Mammary epithelial cell (primary cell): ENCODE measurements at regions of chr10 and their contacts with region 1.

Region 1: GRCh38 chr10:11782793-11783557 is 40.2 kb upstream of the PROSER2 start:
- DNase-seq: peak; percentile 52
- H3K4me3 ChIP-seq: no peak overlapping the region
- H3K27ac ChIP-seq: no peak overlapping the region
- H3K4me1 ChIP-seq: no peaks in the 10 kb centered on the region
- H3K27me3 ChIP-seq: no peaks in the 10 kb centered on the region
- CTCF ChIP-seq: peak; percentile 64 to 73

Region 2: DNA sequence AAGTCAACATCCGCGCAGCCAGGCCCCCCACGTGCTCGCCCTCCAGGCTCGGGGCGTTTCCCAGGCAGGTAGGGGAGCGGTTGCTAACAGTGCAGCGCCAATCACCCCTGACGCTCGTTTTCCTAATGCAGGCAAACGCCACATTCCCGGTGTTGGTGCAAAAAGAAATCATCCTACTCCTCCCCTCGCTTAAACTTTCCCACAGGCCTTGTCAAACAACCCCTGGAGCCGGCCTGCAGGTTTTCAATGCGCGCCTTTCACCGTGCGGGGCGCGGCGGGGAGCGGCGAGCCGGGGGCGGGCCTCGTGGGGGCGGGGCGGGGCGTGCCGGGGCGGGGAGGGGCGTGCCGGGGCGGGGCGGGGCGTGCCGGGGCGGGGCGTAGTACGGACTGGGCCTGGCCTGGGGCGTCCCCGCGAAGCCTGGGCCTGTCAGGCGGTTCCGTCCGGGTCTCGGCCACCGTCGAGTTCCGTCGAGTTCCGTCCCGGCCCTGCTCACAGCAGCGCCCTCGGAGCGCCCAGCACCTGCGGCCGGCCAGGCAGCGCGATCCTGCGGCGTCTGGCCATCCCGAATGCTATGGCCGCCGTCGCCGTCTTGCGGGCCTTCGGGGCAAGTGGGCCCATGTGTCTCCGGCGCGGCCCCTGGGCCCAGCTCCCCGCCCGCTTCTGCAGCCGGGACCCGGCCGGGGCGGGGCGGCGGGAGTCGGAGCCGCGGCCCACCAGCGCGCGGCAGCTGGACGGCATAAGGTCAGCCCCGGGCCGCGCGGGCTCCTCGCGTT is 40.8 kb before region 1 on chr10 and contains the start of gene ECHDC3:
- CTCF ChIA-PET with region 1: interaction called, 12 read pairs
- dilution Hi-C with region 1: no loop called
- in situ Hi-C with region 1: no loop called
- intact Hi-C with region 1: no loop called
- DNase-seq: peak; percentile 19
- H3K4me3 ChIP-seq: peak within 1 kb of the TSS; percentile 52 to 63 (median 56)
- H3K27ac ChIP-seq: no peak within 1 kb of the TSS
- H3K4me1 ChIP-seq: peaks cover 15% of the 10 kb centered on the region
- H3K27me3 ChIP-seq: no peaks in the 10 kb centered on the region
- CTCF ChIP-seq: no peak
- total RNA-seq, gene ECHDC3: 6.9 to 30.8 TPM

Region 3: DNA sequence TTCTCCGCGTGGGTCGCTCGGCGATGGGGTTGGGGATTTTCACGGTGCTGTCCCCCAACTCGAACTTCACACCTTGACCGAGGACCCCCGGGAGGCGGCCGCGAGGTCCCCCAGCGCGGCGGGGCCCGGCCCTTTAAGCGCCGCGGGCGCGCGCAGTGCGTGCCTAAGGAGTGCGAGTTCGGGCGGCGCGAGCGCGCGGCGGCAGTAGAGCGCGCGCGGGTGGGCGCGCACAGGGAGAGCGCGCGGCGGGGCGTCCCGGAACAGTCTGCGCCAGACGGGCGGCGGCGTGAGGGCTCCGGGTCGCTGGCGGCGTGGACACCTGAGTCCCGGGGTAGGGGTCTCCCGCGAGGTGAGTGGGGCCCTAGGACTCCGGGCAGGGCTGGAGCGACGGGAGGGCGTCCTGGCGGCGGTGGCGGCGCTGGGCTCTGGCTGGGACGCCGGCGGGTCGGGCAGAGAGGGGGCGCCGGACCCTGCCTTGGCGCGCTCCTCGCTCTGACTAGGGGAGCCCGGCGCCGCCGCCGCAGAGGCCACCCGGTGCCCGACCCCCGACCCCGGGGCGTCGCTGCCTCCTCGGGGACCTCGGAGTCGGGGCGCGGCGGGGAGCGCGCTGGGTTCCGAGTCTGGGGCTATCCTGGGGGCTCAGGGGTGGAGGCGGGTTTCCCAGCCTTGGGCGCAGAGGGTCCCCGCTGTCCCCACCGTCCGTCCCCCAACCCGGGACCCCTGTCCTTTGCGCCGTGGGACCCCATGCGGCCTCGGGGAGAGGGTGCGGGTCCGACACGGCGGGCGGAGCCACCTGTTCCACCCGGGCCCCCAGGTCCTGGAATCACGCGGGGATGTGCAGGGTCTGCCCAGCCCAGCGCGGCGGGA is 40.4 kb after region 1 on chr10 and contains the start of gene PROSER2:
- CTCF ChIA-PET with region 1: no interaction called
- dilution Hi-C with region 1: no loop called
- in situ Hi-C with region 1: no loop called
- intact Hi-C with region 1: loop called (anchors 1 kb)
- DNase-seq: peak; percentile 66
- H3K4me3 ChIP-seq: peak within 1 kb of the TSS; percentile 89 to 97 (median 92)
- H3K27ac ChIP-seq: peak within 1 kb of the TSS; percentile 59
- H3K4me1 ChIP-seq: peaks cover 23% of the 10 kb centered on the region
- H3K27me3 ChIP-seq: no peaks in the 10 kb centered on the region
- CTCF ChIP-seq: no peak
- total RNA-seq, gene PROSER2: 56.3 to 65.7 TPM

Region 4: GRCh38 chr10:11853468-11853867 is 70.5 kb after region 1 on chr10:
- CTCF ChIA-PET with region 1: interaction called, 4 read pairs
- dilution Hi-C with region 1: loop called (anchors 5 kb)
- in situ Hi-C with region 1: no loop called
- intact Hi-C with region 1: no loop called
- DNase-seq: no peak
- H3K4me3 ChIP-seq: no peak overlapping the region
- H3K27ac ChIP-seq: no peak overlapping the region
- H3K4me1 ChIP-seq: peaks cover 2% of the 10 kb centered on the region
- H3K27me3 ChIP-seq: no peaks in the 10 kb centered on the region
- CTCF ChIP-seq: peak; percentile 21 to 26

Region 5: GRCh38 chr10:11986593-11987216 is 203.7 kb after region 1 on chr10:
- CTCF ChIA-PET with region 1: interaction called, 7 read pairs
- dilution Hi-C with region 1: no loop called
- in situ Hi-C with region 1: no loop called
- intact Hi-C with region 1: loop called (anchors 1 kb)
- DNase-seq: peak; percentile 65
- H3K4me3 ChIP-seq: no peak overlapping the region
- H3K27ac ChIP-seq: no peak overlapping the region
- H3K4me1 ChIP-seq: no peaks in the 10 kb centered on the region
- H3K27me3 ChIP-seq: no peaks in the 10 kb centered on the region
- CTCF ChIP-seq: peak; percentile 86 to 90

Region 6: DNA sequence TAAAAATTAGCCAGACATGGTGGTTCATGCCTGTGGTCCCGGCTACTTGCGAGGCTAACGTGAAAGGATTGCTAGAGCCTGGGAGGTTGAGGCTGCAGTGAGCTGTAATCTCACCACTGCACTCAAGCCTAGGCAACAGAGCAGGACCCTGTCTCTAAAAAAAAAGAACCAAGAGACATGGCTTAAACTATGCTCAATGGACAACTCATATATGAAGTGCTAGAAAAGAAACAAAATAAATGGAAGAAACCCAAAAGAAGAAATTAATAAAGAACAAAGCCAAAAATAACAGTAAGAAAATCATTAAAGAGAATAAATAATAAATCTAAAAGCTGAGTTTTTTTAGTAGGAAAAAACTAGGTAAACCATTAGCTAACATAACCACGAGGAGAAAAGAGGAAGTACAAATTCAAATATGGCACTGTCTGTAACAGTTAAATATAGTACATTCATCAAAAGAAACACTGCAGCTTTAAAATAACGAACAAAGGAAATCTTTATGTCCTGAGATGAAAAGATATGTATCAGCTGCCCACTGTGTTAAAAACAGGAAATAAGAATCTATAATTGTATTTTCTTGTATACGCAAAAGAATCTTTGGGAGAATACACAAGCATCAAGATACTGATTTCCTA is 211.0 kb after region 1 on chr10:
- CTCF ChIA-PET with region 1: interaction called, 13 read pairs
- dilution Hi-C with region 1: no loop called
- in situ Hi-C with region 1: no loop called
- intact Hi-C with region 1: no loop called
- DNase-seq: no peak
- H3K4me3 ChIP-seq: no peak overlapping the region
- H3K27ac ChIP-seq: no peak overlapping the region
- H3K4me1 ChIP-seq: no peaks in the 10 kb centered on the region
- H3K27me3 ChIP-seq: no peaks in the 10 kb centered on the region
- CTCF ChIP-seq: no peak

Region 7: GRCh38 chr10:12129222-12130111 is 346.5 kb after region 1 on chr10 and contains the start of gene SEC61A2:
- CTCF ChIA-PET with region 1: no interaction called
- dilution Hi-C with region 1: no loop called
- in situ Hi-C with region 1: loop called in 1 of 2 experiments (anchors 25 kb)
- intact Hi-C with region 1: no loop called
- DNase-seq: peak; percentile 87
- H3K4me3 ChIP-seq: peak within 1 kb of the TSS; percentile 88 to 94 (median 91)
- H3K27ac ChIP-seq: peak within 1 kb of the TSS; percentile 73
- H3K4me1 ChIP-seq: no peaks in the 10 kb centered on the region
- H3K27me3 ChIP-seq: no peaks in the 10 kb centered on the region
- CTCF ChIP-seq: no peak
- total RNA-seq, gene SEC61A2: 10.7 to 15.6 TPM